ENCODE measurements at regions of chr1 and their contacts with region 1.

Region 1: DNA sequence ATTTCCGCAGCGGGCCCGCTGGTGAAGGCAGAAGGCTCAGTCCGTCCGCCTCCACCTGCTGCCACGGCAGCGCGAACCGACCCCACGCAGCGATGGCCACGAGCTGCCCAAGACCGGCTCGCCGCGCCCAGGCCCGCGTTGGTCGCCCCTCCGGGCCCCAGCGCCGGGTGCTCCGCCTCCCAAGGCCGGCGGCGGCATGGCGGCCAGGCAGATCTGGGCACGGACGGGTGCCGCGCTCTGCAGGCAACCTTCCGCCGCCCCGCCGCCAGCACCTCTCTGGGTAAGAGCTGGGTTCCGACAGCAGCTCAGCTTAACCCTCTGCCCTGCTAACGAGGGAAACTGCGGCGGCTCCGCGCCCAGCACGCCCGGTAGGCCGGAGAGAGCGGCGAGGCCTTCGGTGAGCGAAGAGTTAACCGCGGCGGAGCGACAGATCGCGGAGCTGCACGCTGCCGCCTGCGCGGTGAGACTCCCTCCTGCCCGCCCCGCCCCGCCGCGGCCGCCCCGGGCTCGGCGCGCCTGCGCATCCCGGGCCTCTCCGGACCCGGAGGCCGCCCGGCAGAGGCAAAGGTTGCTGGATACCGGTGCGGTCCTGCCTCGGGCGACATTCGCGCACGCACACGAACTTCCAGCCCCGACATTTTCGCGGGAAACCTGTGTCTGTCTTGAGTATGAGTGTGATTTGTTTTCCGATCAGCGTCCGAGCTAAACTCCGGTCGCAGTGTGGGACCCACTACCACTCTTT is at the start of gene C1orf53:
- DNase-seq: peak; percentile 80
- H3K4me3 Mint-ChIP-seq: peak within 1 kb of the TSS; percentile 85
- H3K27ac Mint-ChIP-seq: peak within 1 kb of the TSS; percentile 74
- H3K4me1 Mint-ChIP-seq: peaks cover 17% of the 10 kb centered on the region
- H3K27me3 Mint-ChIP-seq: peaks cover 45% of the 10 kb centered on the region
- total RNA-seq, gene C1orf53: 0.55 TPM in 1 of 2 experiments, not detected in the other

Region 2: DNA sequence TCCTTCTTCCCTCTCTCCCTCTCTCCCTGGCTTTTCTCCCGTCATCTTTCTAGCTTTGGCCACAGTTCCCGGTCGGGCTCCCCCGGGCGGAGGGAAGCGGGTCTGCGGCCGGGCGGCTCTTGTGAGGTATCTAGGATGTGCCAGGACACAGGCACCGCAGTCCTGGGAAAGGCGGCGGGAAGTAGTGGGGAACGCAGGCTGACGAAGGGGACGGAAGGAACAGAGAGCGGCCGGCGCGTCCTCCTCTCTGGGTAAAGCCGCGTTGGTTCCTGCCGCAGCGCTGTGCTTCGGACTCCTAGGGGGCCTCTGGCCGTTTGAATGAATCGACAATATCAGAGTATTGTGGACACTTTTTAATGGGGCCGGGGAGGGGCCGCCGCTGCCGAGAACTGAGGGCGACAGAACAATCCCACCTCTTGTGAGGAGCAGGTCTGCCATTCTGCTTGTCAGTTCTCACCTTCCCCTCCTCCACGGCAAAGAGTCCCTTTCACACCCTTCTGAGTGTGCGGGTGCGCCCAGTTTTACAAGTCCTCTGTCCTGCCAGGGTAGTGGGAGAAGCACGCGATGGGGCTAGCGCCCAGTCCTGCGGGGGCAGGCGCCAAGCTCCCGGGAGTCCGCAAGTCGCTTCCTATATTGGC is 13.4 kb after region 1 on chr1:
- CTCF ChIA-PET with region 1: interaction called, 35 read pairs
- POLR2A ChIA-PET with region 1: interaction called, 25 read pairs
- DNase-seq: no peak
- H3K4me3 Mint-ChIP-seq: peak overlapping the region; percentile 25
- H3K27ac Mint-ChIP-seq: no peak overlapping the region
- H3K4me1 Mint-ChIP-seq: peaks cover 83% of the 10 kb centered on the region
- H3K27me3 Mint-ChIP-seq: peaks cover 99% of the 10 kb centered on the region

Region 3: GRCh38 chr1:197955486-197956394 is 53.1 kb after region 1 on chr1:
- CTCF ChIA-PET with region 1: no interaction called
- POLR2A ChIA-PET with region 1: no interaction called
- DNase-seq: no peak
- H3K4me3 Mint-ChIP-seq: no peak overlapping the region
- H3K27ac Mint-ChIP-seq: no peak overlapping the region
- H3K4me1 Mint-ChIP-seq: peaks cover 9% of the 10 kb centered on the region
- H3K27me3 Mint-ChIP-seq: peaks cover 6% of the 10 kb centered on the region